ENCODE measurements at regions of chr3 and their contacts with region 1.

Region 1: DNA sequence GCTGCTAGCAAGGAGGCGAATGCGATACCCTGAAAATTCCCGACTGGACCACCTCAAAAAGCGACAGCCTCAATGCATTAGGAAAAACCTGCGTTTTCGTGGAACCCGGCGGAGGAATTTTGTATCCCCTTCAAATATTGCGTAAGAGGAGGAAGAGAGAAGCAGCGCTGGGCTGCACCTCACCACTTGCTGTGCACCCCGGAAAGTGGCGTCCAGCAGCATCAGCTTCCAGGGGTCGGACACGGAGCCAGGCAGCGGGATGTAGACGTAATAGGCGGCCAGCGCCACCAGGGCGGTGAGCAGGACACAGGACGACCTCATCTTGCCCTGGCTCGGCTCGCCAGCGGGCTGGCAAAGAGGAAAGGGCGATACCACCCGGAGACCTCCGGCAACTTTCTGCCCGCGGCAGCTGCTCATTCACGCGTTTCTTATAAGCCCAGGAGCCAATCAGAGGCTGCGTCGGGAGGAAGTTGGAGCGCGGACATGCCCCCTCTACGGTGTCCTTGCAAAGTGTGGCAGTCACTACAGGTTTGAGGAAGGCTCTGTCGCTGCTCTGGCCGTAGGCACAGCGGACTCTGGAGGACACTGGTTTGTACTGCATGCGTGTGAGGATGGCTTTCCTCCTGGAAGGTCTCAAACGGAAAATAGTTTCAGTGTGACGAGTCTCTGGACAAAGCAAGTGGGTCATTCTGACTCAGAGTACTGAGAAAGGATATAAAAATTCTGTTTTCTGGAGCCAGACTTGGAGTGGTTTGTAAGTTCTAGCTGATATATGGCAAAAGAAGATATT is at the start of gene NCEH1:
- DNase-seq: peak; percentile 86
- ATAC-seq: peak; percentile 99
- H3K4me3 ChIP-seq: peak within 1 kb of the TSS; percentile 67
- H3K27ac ChIP-seq: peak within 1 kb of the TSS; percentile 52
- H3K4me1 ChIP-seq: no peaks in the 10 kb centered on the region; the same call in 1 of the 2 replicates
- H3K27me3 ChIP-seq: no peaks in the 10 kb centered on the region
- CTCF ChIP-seq: peak; percentile 82 to 96 (median 91); a peak in 5 of 6 replicates
- EP300 ChIP-seq: no peak
- POLR2A ChIP-seq: peak; percentile 84
- RAD21 ChIP-seq: peak; percentile 65
- polyA plus RNA-seq, gene NCEH1: 1.8 to 2.3 TPM

Region 2: DNA sequence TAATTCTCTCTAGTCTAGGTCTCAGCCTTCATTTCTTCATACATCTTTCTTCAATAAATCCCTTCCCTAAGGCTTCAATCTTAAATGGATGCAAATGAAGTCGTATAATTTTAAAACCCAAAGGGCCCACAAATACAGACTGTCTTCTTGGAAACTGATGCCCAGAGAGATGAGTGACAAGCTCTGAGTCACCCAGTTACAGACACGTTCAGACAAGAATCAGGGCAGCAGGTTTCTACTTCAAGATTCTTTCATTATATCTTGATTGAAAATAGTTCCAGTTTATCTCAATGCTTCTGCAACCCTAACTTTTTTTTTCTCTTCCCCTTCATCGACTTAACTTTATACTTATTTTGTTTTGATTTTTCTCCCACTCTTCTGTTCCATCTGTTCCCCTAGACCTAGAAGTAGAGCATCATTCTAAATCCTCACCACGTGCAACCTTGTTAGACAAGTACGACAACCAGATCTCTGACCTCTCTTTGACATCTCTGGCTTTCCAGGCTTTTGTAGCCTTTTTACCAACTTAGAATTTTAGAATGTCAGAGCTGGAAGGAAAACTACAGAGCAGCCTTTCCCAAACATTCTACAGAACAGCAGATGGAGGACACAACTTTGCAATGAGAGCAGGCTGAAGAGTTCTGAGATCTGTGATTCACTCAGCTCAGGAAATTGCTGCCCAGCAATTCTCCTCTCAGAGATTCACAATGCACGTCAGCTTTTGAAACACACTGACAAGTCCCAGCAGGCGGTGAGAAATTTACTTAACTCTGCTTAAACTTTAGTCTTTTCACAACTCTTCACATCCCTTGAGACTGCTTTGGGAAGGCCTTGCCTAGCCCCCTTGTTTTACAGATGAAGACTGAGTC is 25.3 kb before region 1 on chr3:
- CTCF ChIA-PET with region 1: interaction called, 10 read pairs
- POLR2A ChIA-PET with region 1: no interaction called
- RAD21 ChIA-PET with region 1: no interaction called
- SMC1A ChIA-PET with region 1: no interaction called
- in situ Hi-C with region 1: no loop called
- intact Hi-C with region 1: no loop called
- DNase-seq: no peak
- ATAC-seq: no peak
- H3K4me3 ChIP-seq: no peak overlapping the region
- H3K27ac ChIP-seq: no peak overlapping the region
- H3K4me1 ChIP-seq: no peaks in the 10 kb centered on the region
- H3K27me3 ChIP-seq: no peaks in the 10 kb centered on the region
- CTCF ChIP-seq: no peak
- EP300 ChIP-seq: no peak
- POLR2A ChIP-seq: no peak
- RAD21 ChIP-seq: no peak

Region 3: DNA sequence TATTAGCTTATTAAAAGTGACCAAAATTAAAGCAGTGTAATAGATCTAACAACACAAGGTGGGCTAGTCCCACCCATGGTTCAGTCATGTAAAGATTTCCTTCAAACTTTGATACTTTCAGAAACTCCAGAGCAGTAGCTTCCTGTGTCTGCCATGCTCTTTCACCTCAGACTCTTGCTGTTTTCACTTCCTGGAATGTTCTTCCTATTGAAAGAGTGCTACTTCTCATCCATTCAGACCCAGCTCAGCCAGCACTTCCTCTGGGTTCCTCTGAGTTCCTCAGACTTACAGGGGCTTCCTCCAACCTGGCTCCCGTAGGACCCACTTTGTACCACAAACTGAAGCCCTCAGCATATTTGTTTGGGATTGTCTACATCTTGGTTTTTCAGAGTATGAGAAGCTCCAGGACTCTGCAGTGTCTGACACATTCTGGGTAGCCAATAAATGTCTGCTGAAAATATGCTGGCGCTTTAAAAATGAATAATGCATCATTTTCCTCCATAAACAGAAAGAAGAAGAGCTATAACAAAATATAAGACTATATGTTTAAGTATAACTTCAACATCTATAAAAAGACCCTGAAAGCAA is 18.0 kb before region 1 on chr3:
- CTCF ChIA-PET with region 1: interaction called, 20 read pairs
- POLR2A ChIA-PET with region 1: no interaction called
- RAD21 ChIA-PET with region 1: interaction called, 4 read pairs
- SMC1A ChIA-PET with region 1: interaction called, 5 read pairs
- in situ Hi-C with region 1: no loop called
- intact Hi-C with region 1: no loop called
- DNase-seq: no peak
- ATAC-seq: peak; percentile 76
- H3K4me3 ChIP-seq: no peak overlapping the region
- H3K27ac ChIP-seq: peak overlapping the region; percentile 13
- H3K4me1 ChIP-seq: peaks cover 17% of the 10 kb centered on the region
- H3K27me3 ChIP-seq: no peaks in the 10 kb centered on the region
- CTCF ChIP-seq: no peak
- EP300 ChIP-seq: no peak
- POLR2A ChIP-seq: no peak
- RAD21 ChIP-seq: no peak

Measured in GM12878 (cell line).